CD14-positive monocyte (primary cell): ENCODE measurements at regions of chr4 and their contacts with region 1.

Region 1: DNA sequence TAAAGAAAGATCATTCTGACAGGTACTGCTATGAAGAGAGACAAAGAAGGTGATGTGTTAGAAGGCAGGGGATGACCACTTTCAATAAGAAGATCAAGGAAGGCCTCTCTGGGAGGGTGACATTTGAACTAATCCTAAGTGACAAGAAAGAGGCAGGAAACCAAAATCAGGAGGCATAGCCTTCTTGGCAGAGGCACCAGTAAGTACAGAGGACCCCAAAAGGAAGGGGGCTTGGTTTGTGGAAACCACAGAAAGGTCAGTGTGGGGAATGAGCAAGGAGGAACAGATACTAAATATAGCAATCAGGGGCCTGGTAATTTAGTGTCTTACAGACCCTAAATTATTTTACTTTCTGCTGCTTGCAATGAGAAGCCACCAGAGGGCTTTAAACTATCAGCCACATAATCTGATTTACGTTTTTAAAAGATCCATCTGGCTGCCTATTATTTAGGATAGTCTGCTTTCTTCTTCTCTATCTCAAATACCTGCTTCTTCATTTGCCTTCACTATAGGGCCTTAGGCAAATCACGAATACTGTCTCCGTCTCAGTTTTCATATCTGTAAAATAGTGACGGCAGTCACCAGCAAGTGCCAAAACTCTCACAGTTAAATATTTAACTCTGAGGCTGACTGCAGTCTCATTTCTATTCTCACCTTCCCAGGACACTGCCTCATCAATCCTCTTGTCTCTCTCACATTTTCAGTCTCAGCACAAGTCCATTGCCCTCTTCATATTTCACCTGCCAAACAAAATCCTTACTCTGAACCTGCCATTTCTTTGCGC is 16.7 kb downstream of the NR3C2 start:
- DNase-seq: no peak
- H3K4me3 ChIP-seq: no peak overlapping the region
- H3K4me3 Mint-ChIP-seq: no peak overlapping the region
- H3K27ac ChIP-seq: no peak overlapping the region
- H3K27ac Mint-ChIP-seq: no peak overlapping the region
- H3K4me1 ChIP-seq: no peaks in the 10 kb centered on the region
- H3K4me1 Mint-ChIP-seq: peaks cover 2% of the 10 kb centered on the region
- H3K27me3 ChIP-seq: peaks cover 0 to 3% of the 10 kb centered on the region in 2 donors
- H3K27me3 Mint-ChIP-seq: peaks cover 0 to 11% (median 2%) of the 10 kb centered on the region in 3 donors
- CTCF ChIP-seq: no peak

Region 2: GRCh38 chr4:148454835-148455234 is 29.3 kb after region 1 on chr4:
- intact Hi-C with region 1: loop called in 1 of 2 experiments (anchors 5 kb)
- DNase-seq: no peak
- H3K4me3 ChIP-seq: no peak overlapping the region
- H3K4me3 Mint-ChIP-seq: no peak overlapping the region
- H3K27ac ChIP-seq: no peak overlapping the region
- H3K27ac Mint-ChIP-seq: no peak overlapping the region
- H3K4me1 ChIP-seq: no peaks in the 10 kb centered on the region
- H3K4me1 Mint-ChIP-seq: no peaks in the 10 kb centered on the region
- H3K27me3 ChIP-seq: peaks cover 7 to 15% of the 10 kb centered on the region in 2 donors
- H3K27me3 Mint-ChIP-seq: peaks cover 3 to 8% (median 7%) of the 10 kb centered on the region in 3 donors
- CTCF ChIP-seq: no peak